ENCODE measurements at regions of chr10 and their contacts with region 1.

Region 1: DNA sequence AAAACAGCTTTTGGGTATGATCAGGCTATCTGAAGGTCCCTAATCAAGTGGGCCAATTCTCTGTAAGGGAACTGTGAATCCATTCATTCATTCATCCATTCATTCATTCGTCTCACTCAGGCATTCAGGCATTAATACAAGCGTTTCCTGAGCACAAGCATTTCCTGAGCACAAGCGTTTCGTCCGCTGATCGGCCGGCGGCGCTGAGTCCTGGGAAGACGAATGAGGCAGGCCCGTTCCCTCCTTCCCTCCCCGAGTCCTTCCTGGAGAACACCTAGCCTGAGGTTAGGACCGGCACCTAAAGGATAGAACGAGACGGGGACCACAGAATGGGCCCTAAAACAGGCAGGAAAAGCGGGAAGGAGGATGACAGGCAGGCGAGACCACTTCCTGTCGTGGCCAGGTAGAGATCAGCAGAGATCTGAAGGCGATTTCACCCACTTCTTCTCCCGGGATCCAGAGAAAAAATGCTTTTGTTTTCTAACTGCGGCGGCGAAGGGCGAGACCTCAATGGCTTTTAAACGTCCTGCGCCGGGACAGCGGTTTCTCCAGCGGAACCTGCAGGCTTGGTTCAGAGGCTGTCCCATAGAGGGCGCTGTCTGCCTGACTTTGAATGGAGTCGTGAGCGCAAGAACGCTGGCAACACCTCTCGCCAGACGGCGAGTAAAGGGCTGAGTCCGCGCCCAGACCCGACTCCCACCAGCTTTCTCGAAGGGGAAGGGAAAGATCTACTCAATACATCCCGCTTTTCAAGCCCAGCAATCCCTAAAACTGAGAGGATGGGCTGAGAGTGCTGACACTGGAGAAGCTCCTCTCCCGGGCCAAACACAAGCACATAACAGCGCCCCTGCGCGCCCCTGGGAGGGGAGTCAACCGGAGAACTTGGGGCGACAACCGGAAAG is 2.9 kb upstream of the HMX3 start:
- DNase-seq: peak; percentile 77 to 91 (median 82)
- ATAC-seq: peak; percentile 67
- H3K4me3 ChIP-seq: peak overlapping the region; percentile 10
- H3K4me3 Mint-ChIP-seq: peak overlapping the region; percentile 83
- H3K27ac ChIP-seq: no peak overlapping the region
- H3K27ac Mint-ChIP-seq: no peak overlapping the region
- H3K4me1 ChIP-seq: peaks cover 49% of the 10 kb centered on the region
- H3K4me1 Mint-ChIP-seq: peaks cover 29% of the 10 kb centered on the region
- H3K27me3 ChIP-seq: peaks cover 59 to 74% of the 10 kb centered on the region in 2 experiments
- H3K27me3 Mint-ChIP-seq: peaks cover 90% of the 10 kb centered on the region
- CTCF ChIP-seq: peak; percentile 87

Region 2: GRCh38 chr10:122648599-122649428 is 484.0 kb before region 1 on chr10:
- CTCF ChIA-PET with region 1: no interaction called
- POLR2A ChIA-PET with region 1: no interaction called
- intact Hi-C with region 1: loop called in 1 of 2 experiments (anchors 5 kb)
- DNase-seq: peak in 5 of 14 experiments; percentile 5 to 29 (median 17)
- ATAC-seq: no peak
- H3K4me3 ChIP-seq: no peak overlapping the region
- H3K4me3 Mint-ChIP-seq: no peak overlapping the region
- H3K27ac ChIP-seq: no peak overlapping the region
- H3K27ac Mint-ChIP-seq: no peak overlapping the region
- H3K4me1 ChIP-seq: no peaks in the 10 kb centered on the region
- H3K4me1 Mint-ChIP-seq: no peaks in the 10 kb centered on the region
- H3K27me3 ChIP-seq: peaks cover 7 to 9% of the 10 kb centered on the region in 2 experiments
- H3K27me3 Mint-ChIP-seq: peaks cover 42% of the 10 kb centered on the region
- CTCF ChIP-seq: peak; percentile 21

Region 3: DNA sequence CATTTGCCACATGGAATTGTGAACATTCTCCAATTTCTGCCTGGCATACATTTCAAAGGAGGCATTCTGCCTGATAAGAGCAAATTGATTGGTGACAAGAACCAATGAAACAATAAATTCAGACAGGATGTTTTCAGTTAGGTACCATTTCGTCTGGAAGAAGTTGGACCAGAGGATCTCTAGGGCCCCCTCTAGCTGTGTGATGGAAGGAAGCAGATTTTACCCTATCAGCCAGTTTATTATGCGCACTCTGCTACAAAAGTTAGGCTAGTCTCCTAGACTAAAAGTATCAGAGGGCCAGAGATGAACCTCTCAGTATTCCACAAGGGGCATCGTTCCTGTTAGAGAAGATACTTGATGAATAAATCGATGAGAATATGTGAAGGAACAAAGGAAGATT is 139.3 kb after region 1 on chr10:
- CTCF ChIA-PET with region 1: no interaction called
- POLR2A ChIA-PET with region 1: no interaction called
- intact Hi-C with region 1: loop called (anchors 5 kb)
- DNase-seq: peak in 3 of 14 experiments; percentile 16 to 19 (median 18)
- ATAC-seq: peak; percentile 57
- H3K4me3 ChIP-seq: no peak overlapping the region
- H3K4me3 Mint-ChIP-seq: no peak overlapping the region
- H3K27ac ChIP-seq: no peak overlapping the region
- H3K27ac Mint-ChIP-seq: no peak overlapping the region
- H3K4me1 ChIP-seq: no peaks in the 10 kb centered on the region
- H3K4me1 Mint-ChIP-seq: no peaks in the 10 kb centered on the region
- H3K27me3 ChIP-seq: peaks cover 7 to 12% of the 10 kb centered on the region in 2 experiments
- H3K27me3 Mint-ChIP-seq: peaks cover 28% of the 10 kb centered on the region
- CTCF ChIP-seq: peak; percentile 15

Region 4: GRCh38 chr10:123559066-123559822 is 426.4 kb after region 1 on chr10:
- CTCF ChIA-PET with region 1: no interaction called
- POLR2A ChIA-PET with region 1: no interaction called
- intact Hi-C with region 1: loop called (anchors 1 kb)
- DNase-seq: peak; percentile 36 to 79 (median 61)
- ATAC-seq: peak; percentile 66
- H3K4me3 ChIP-seq: no peak overlapping the region
- H3K4me3 Mint-ChIP-seq: no peak overlapping the region
- H3K27ac ChIP-seq: no peak overlapping the region
- H3K27ac Mint-ChIP-seq: no peak overlapping the region
- H3K4me1 ChIP-seq: peaks cover 4% of the 10 kb centered on the region
- H3K4me1 Mint-ChIP-seq: no peaks in the 10 kb centered on the region
- H3K27me3 ChIP-seq: peaks cover 0 to 4% of the 10 kb centered on the region in 2 experiments
- H3K27me3 Mint-ChIP-seq: peaks cover 32% of the 10 kb centered on the region
- CTCF ChIP-seq: peak; percentile 98

Region 5: DNA sequence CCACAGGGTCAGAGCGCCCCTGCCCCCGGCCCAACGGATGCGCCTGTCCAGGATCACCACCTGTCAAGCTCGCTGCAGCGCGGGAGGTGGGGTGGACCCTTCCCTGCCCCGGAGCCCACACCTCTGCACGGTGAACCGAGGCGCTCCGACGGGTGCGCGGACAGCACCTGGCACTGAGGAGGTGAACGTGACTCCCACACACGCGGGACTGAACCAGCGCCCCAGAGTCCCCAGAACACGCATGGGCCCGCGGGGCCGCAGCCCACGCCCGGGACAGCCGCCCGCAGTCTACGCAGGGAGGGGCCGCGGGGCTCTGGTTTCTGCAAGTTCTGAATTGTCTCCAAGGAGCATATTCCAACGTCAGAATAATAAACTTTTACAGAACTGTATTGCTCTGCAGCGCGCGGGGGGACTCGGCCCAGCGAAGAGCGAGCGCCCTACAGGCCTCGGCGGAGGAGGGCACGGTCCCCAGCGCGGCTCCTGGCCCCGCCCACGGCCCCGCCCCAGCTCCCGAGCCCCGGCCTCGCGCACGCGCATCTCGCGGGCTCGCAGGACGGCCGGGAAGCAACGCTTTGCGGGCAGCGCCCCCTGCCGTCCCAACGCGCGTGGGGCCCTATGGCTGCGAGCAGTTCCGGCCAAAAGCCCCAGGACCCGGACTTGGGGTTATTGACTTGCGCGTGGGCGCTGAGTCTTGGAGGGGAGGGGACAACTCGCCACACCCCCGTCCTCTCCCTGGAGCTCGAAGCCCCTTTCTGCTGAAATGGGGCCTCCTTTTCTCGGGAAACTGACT is 1256.2 kb after region 1 on chr10:
- CTCF ChIA-PET with region 1: no interaction called
- POLR2A ChIA-PET with region 1: no interaction called
- intact Hi-C with region 1: loop called in 1 of 2 experiments (anchors 5 kb)
- DNase-seq: peak; percentile 78 to 97 (median 92)
- ATAC-seq: peak; percentile 99
- H3K4me3 ChIP-seq: peak overlapping the region; percentile 51
- H3K4me3 Mint-ChIP-seq: peak overlapping the region; percentile 58
- H3K27ac ChIP-seq: no peak overlapping the region
- H3K27ac Mint-ChIP-seq: no peak overlapping the region
- H3K4me1 ChIP-seq: peaks cover 13% of the 10 kb centered on the region
- H3K4me1 Mint-ChIP-seq: peaks cover 4% of the 10 kb centered on the region
- H3K27me3 ChIP-seq: peaks cover 0 to 4% of the 10 kb centered on the region in 2 experiments
- H3K27me3 Mint-ChIP-seq: no peaks in the 10 kb centered on the region
- CTCF ChIP-seq: peak; percentile 94